Vagina (tissue), 2 donors: ENCODE measurements at regions of chr5 and their contacts with region 1.

Region 1: GRCh38 chr5:142699184-142699720 is 13.4 kb upstream of the FGF1 start:
- DNase-seq: peak in 1 of 2 donors; percentile 92
- H3K4me3 ChIP-seq: no peak overlapping the region
- H3K27ac ChIP-seq: peak overlapping the region; percentile 16
- H3K4me1 ChIP-seq: peaks cover 21% of the 10 kb centered on the region
- H3K27me3 ChIP-seq: no peaks in the 10 kb centered on the region
- CTCF ChIP-seq: peak; percentile 95 to 97 (median 96)
- POLR2A ChIP-seq: no peak

Region 2: GRCh38 chr5:141040771-141041426 is 1658.4 kb before region 1 on chr5:
- intact Hi-C with region 1: no loop called
- DNase-seq: no peak
- H3K4me3 ChIP-seq: peak overlapping the region; percentile 19 to 24
- H3K27ac ChIP-seq: no peak overlapping the region
- H3K4me1 ChIP-seq: peaks cover 15% of the 10 kb centered on the region
- H3K27me3 ChIP-seq: no peaks in the 10 kb centered on the region
- CTCF ChIP-seq: peak; percentile 54 to 77 (median 61)
- POLR2A ChIP-seq: no peak

Region 3: DNA sequence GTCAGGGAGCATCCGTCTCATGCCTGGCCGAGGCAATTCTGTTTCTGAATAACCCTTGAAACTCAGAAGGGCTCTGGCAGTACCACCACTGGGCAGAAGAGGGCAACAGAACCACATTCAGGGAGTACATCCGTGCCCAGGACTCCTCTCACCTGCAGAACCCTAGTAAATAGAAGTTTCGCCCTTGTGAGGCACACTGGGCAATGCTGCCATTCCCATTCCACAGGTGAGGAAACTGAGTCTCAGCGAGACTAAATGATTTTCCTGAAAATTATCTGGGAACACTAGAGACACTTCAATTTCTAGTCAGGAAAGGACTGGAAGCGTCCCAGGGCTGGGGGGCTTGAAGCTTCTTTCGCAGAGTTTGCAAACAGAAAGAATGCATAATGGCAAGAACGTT is 88.1 kb before region 1 on chr5:
- intact Hi-C with region 1: loop called (anchors 5 kb)
- DNase-seq: no peak
- H3K4me3 ChIP-seq: no peak overlapping the region
- H3K27ac ChIP-seq: no peak overlapping the region
- H3K4me1 ChIP-seq: no peaks in the 10 kb centered on the region
- H3K27me3 ChIP-seq: no peaks in the 10 kb centered on the region
- CTCF ChIP-seq: peak; percentile 60 to 77 (median 75)
- POLR2A ChIP-seq: no peak

Region 4: DNA sequence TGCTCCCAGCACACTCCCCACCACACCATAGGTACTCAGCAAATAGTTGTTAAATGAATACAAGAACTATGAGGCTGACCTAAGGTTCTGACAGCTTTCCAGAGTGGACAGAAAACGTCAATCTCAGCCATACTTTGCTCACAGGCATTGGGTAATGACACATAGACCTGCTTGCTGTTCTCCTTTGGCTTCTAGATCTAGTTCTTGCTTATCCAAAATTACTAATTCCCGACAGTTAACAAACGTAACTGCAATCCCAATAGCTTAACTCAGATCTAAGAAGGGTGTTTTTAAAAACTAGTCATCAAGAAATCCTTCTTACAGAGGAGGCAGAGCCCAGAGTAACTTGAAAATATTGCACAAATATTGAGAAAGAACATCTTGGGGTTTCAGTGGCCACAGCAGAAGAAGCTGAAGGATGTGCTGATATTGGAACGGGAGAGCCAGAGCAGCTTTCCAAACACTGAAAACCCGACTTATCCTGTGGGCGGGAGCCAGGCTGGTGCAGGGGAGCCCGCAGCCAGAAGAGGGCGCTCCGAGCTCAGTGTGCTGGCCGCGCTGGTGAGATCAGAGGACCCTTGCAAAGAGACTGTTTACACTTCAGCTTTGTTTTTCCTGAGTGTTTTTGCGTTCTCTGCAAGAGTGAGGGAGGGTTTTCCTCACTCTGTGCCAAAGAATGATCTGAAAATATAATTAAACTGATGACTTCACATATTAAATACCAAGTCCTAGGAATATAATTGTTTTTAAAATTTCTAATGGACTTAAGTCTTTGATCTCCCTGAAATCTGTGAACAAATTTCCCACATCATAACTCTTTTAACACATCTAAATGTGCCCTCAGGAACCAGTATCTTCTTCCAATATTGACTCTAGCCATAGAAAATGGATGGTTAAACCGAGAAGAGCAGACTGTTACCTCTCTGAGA is 43.6 kb before region 1 on chr5:
- intact Hi-C with region 1: loop called (anchors 5 kb)
- DNase-seq: no peak
- H3K4me3 ChIP-seq: no peak overlapping the region
- H3K27ac ChIP-seq: no peak overlapping the region
- H3K4me1 ChIP-seq: peaks cover 5% of the 10 kb centered on the region
- H3K27me3 ChIP-seq: no peaks in the 10 kb centered on the region
- CTCF ChIP-seq: peak; percentile 76 to 96 (median 90)
- POLR2A ChIP-seq: no peak